OCI-LY7 (cell line): ENCODE measurements at regions of chr20 and their contacts with region 1.

Region 1: GRCh38 chr20:48818407-48818987 is 9.3 kb downstream of the PREX1 start:
- DNase-seq: peak; percentile 91
- H3K4me3 ChIP-seq: peak overlapping the region; percentile 55
- H3K27ac ChIP-seq: peak overlapping the region; percentile 93
- H3K4me1 ChIP-seq: peaks cover 94% of the 10 kb centered on the region
- CTCF ChIP-seq: no peak

Region 2: DNA sequence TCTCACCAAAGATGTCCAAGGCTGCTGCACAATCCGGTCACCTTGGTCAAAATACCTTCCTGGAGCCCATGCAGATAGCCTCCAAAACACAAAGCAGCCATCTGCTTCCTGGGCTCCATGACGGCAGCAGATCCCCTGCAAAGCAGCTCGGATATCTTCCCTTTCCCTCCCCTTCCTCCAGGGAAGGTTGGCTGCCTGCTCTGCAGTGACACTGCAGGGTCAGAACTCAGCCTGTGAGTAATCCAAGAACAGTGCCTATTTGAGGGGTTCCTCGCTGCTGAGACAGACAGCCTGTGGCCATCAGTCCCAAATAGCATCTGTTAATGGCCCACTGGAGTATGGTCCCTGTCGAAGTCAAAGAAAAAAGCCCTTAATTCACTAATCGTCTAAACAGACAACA is 261.5 kb before region 1 on chr20:
- CTCF ChIA-PET with region 1: no interaction called
- POLR2A ChIA-PET with region 1: no interaction called
- intact Hi-C with region 1: no loop called
- DNase-seq: no peak
- H3K4me3 ChIP-seq: no peak overlapping the region
- H3K27ac ChIP-seq: no peak overlapping the region
- H3K4me1 ChIP-seq: no peaks in the 10 kb centered on the region
- CTCF ChIP-seq: no peak

Region 3: DNA sequence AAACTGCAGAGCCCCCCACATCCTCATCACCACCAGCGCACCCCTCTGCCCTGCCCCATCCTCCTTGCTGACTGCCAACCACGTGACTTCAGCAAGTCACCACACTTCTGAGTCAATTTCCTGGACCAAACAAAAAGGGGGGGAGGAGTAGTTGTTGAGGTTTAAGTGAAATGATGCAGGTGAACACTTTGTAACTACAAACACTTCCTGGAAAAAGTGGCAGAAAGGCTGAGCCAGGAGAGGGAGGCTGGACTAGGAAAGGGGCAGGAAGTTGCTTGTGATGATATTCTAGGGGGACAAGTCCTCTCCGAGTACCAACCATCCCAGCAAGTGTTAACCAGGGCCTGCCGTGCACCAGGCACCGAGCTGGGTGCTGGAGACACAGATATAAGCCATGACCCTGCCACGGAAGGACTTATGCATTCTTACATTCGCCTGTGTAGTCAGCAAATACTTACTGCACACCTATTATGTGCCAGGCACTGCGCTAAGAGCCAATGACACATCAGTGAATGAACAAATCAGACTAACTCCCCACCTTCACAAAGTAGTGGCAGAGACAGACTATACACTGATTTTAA is 58.0 kb before region 1 on chr20:
- CTCF ChIA-PET with region 1: no interaction called
- POLR2A ChIA-PET with region 1: no interaction called
- intact Hi-C with region 1: loop called (anchors 2 kb)
- DNase-seq: peak; percentile 77
- H3K4me3 ChIP-seq: peak overlapping the region; percentile 33
- H3K27ac ChIP-seq: peak overlapping the region; percentile 80
- H3K4me1 ChIP-seq: peaks cover 45% of the 10 kb centered on the region
- CTCF ChIP-seq: no peak

Region 4: GRCh38 chr20:48781634-48782033 is 36.9 kb before region 1 on chr20:
- CTCF ChIA-PET with region 1: no interaction called
- POLR2A ChIA-PET with region 1: interaction called, 4 read pairs
- intact Hi-C with region 1: loop called (anchors 2 kb)
- DNase-seq: no peak
- H3K4me3 ChIP-seq: no peak overlapping the region
- H3K27ac ChIP-seq: peak overlapping the region; percentile 56
- H3K4me1 ChIP-seq: peaks cover 36% of the 10 kb centered on the region
- CTCF ChIP-seq: no peak

Region 5: GRCh38 chr20:48787861-48788375 is 30.6 kb before region 1 on chr20:
- CTCF ChIA-PET with region 1: no interaction called
- POLR2A ChIA-PET with region 1: interaction called, 11 read pairs
- intact Hi-C with region 1: no loop called
- DNase-seq: peak; percentile 32
- H3K4me3 ChIP-seq: peak overlapping the region; percentile 16
- H3K27ac ChIP-seq: peak overlapping the region; percentile 81
- H3K4me1 ChIP-seq: peaks cover 68% of the 10 kb centered on the region
- CTCF ChIP-seq: no peak